Heart right ventricle (tissue), 16 donors: ENCODE measurements at regions of chr3 and their contacts with region 1.

Region 1: GRCh38 chr3:146817704-146818103 is 212.6 kb upstream of the PLSCR5 start:
- DNase-seq: no peak
- ATAC-seq: peak in 1 of 8 donors; percentile 31
- H3K4me3 ChIP-seq: no peak overlapping the region
- H3K27ac ChIP-seq: no peak overlapping the region
- H3K4me1 ChIP-seq: no peaks in the 10 kb centered on the region
- H3K27me3 ChIP-seq: peaks cover 0 to 2% (median 0%) of the 10 kb centered on the region in 7 donors
- CTCF ChIP-seq: peak in 7 of 9 donors; percentile 24 to 54 (median 46)

Region 2: GRCh38 chr3:146770881-146771280 is 46.8 kb before region 1 on chr3:
- intact Hi-C with region 1: no loop called
- DNase-seq: no peak
- ATAC-seq: no peak
- H3K4me3 ChIP-seq: no peak overlapping the region
- H3K27ac ChIP-seq: no peak overlapping the region
- H3K4me1 ChIP-seq: no peaks in the 10 kb centered on the region
- H3K27me3 ChIP-seq: no peaks in the 10 kb centered on the region
- CTCF ChIP-seq: no peak

Region 3: DNA sequence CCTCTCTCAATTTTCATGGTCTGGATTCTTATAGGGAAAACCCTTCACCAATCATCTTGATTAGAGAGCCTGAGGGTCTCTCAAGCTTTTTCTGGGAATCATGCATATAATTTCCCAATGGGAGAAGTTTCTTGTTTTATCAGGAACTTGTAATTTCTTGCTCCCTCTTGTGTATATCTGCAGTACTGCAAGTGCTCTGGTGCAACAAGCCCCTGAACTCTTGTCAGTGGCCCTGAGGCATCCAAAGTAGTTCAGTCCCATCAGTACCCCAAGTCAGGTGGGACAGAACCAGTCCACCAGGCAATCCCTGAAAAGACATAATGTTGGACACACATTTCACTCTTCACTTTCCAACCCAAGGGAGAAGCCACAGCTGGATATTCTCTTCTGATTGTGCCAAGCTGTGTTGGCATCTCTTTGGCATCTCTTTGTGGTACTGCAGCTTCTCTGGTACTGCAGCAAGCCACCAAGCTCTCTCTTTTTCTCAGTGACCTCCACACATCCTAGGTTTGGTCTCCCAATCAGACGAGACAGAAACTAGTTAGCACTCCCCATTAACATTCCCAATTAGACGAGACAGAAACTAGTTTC is 374.2 kb after region 1 on chr3:
- intact Hi-C with region 1: loop called in 9 of 10 experiments (anchors 2 to 10 kb)
- DNase-seq: peak in 1 of 2 donors; percentile 16
- ATAC-seq: no peak
- H3K4me3 ChIP-seq: no peak overlapping the region
- H3K27ac ChIP-seq: no peak overlapping the region
- H3K4me1 ChIP-seq: no peaks in the 10 kb centered on the region
- H3K27me3 ChIP-seq: peaks cover 0 to 2% (median 0%) of the 10 kb centered on the region in 7 donors
- CTCF ChIP-seq: peak; percentile 43 to 75 (median 68)